Lower leg skin (tissue), 4 donors: ENCODE measurements at regions of chr5 and their contacts with region 1.

Region 1: DNA sequence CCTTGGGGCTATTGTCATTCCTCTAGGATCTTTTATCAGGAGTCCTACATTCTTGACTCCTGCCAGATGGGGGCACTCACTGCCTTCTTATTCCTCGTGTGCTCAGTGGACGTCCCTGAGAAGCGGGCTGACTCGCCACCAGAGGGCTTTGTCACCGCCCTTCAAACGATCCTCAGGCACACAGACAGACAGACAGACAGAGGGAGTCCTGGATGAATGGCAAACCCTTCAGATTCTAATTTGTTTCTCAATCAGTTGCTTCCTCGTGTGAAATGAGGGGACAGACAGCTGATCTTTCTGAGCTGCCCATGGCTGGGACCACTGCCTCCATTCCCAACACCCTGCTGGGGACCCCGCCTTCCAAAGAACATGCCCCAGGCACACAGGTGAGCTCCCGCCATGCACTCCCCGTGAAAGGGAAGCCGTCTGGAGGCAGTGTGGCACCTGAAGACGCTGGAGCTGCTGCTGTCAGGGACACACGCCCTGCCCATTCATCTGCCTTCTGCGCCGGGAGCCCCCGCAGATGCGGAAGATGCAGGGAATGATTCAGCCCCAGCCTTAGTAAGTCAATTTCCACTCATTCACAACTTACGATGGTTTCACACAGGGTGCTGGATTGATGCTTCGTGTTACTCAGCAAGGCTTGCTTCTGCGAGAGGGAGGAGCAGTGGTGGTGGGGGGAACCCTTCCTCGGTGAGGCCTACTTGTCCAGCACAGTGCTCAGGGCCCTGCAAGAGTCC is 24.9 kb upstream of the SH3PXD2B start:
- DNase-seq: peak; percentile 73 to 93
- H3K4me3 ChIP-seq: no peak overlapping the region
- CTCF ChIP-seq: peak in 1 of 3 donors; percentile 75
- POLR2A ChIP-seq: no peak

Region 2: GRCh38 chr5:172697123-172698121 is 218.2 kb after region 1 on chr5:
- intact Hi-C with region 1: loop called (anchors 5 kb)
- DNase-seq: peak; percentile 87 to 97
- H3K4me3 ChIP-seq: peak overlapping the region; percentile 35
- CTCF ChIP-seq: peak in 1 of 3 donors; percentile 89
- POLR2A ChIP-seq: no peak